ENCODE measurements at regions of chr18 and their contacts with region 1.

Region 1: DNA sequence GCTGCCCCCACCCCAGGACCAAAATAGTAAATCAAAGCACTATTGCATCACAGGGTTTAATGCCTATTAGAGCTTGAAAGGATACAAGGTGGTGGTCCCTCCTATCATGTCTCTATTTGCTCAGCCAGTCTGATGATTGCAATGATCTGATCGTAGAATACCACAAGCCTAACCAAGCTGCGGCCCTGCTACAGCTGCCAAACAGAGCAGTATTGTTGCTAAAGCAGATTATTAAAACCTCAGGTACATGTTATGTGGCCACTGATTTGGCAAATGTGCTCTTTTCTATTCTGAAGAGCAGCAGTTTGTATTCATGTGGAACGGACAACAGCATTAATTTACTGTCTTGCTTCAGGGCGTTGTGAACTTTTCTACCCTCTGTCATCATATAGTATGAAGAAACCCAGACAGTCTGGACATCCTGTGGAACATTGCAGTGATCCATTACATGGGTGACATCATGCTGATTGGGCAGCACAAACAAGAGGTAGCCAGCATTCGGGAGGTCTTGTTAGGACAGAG is 8.4 kb upstream of the VAPA start:
- DNase-seq: no peak
- ATAC-seq: no peak
- H3K4me3 ChIP-seq: no peak overlapping the region
- H3K27ac ChIP-seq: no peak overlapping the region
- H3K4me1 ChIP-seq: peaks cover 0 to 5% (median 0%) of the 10 kb centered on the region in 12 donors
- H3K27me3 ChIP-seq: no peaks in the 10 kb centered on the region
- CTCF ChIP-seq: no peak
- POLR2A ChIP-seq: no peak

Region 2: DNA sequence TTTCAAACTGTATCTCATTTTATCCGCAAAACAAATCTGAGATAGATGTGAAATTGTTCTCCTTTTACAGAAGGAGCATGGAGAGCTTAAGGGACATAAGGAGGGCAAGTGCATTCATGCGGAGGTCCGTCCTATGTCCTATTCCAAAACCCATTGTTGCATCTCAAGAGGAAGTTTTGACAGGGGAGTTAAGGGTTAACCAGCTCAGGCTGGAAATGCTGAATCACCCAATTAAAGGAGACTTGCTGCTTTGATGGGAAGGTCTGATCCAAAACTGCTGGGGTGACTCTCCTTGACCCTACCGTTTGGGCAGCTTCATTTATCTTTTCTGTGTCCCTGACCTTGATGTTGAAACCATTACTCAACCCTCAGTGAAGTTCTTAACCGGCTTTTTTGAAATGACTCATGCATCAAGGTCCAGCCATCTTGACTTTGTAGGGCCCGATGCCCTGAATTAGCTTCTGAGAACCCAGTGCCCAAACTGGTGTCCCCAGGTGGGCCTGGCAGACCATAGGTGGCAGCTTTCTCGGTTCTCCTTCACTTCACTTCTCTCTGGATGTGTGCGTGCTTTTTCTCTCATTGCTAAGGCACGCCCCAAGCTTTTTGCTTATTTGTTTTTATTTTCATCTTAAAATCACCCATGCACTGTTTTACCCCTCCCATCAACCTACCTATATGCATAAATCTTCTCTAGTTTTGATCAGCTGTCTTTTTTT is 35.6 kb before region 1 on chr18:
- intact Hi-C with region 1: loop called in 2 of 10 experiments (anchors 5 kb)
- DNase-seq: no peak
- ATAC-seq: peak in 1 of 4 donors; percentile 52
- H3K4me3 ChIP-seq: no peak overlapping the region
- H3K27ac ChIP-seq: no peak overlapping the region
- H3K4me1 ChIP-seq: peaks cover 0 to 16% (median 0%) of the 10 kb centered on the region in 12 donors
- H3K27me3 ChIP-seq: no peaks in the 10 kb centered on the region
- CTCF ChIP-seq: no peak
- POLR2A ChIP-seq: no peak

Measured in heart left ventricle (tissue), 16 donors.